ENCODE measurements at regions of chr12 and their contacts with region 1.

Region 1: DNA sequence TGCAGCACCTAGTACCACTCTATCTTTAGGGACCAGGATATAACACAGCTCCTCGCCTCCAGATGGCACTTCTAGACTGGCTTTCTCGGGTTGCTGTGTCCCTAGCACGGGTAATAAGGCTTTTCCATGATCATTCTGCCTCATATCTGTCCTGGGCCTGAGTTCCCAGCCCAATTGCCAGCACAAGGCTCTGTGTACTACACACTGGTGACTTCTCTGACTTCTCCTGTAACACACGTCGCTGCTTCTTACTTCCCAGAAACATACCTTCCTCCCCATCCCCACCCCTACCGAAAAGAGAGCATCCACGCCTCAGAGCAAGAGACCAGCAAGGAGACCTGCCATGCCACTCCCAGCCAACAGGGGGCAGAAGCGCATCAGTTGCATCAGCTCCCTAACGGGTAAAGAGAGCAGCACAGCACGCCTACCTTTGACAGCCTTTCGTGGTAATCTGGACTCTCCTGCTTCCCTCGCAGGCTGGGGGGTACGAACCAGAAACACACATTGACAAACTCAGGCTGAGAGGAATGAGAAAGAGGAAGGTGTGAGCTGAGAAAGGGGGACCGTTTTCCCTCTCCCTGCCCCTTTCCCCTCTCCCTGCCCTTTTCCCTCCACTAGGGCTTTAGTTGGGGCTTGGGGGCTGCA is 21.2 kb upstream of the ZNF740 start:
- DNase-seq: peak; percentile 83 to 85 (median 85)
- H3K4me3 ChIP-seq: no peak overlapping the region
- H3K4me3 Mint-ChIP-seq: peak overlapping the region in 2 of 8 donors; percentile 2 to 54
- H3K27ac ChIP-seq: no peak overlapping the region
- H3K27ac Mint-ChIP-seq: peak overlapping the region in 4 of 7 donors; percentile 3 to 87 (median 44)
- H3K4me1 ChIP-seq: peaks cover 10% of the 10 kb centered on the region
- H3K4me1 Mint-ChIP-seq: peaks cover 5 to 8% (median 6%) of the 10 kb centered on the region in 4 donors
- H3K27me3 ChIP-seq: no peaks in the 10 kb centered on the region
- H3K27me3 Mint-ChIP-seq: no peaks in the 10 kb centered on the region

Region 2: DNA sequence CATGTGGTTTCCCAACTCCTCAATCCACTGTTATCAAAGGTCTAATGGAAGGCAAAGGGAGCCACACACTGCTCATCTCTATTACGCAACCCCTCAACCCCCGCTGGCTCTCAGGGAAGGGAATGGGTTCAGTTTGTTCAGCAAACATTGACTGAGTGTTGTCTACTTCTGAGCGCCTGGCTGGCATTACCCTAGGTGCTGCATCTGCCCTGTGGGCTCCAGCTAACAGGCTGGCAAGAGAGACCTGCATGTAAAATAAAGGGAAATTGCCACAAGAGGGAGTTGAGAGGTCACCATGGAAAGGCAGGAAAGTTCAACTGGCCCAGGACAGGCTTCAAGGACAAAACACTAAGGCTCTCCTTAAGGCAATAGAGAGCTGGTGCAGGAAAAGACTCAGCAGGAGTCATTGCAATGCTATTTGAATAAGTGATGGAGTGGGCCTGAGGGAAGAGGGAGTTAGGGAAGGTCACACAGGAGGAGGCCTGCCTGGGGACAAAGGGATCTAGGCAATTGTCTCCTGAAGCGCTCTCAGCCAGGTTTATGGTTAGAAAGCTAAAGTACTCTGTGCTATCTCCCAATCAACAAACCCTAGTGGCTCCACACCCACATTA is 15.7 kb after region 1 on chr12:
- CTCF ChIA-PET with region 1: interaction called, 51 read pairs
- POLR2A ChIA-PET with region 1: interaction called, 17 read pairs
- intact Hi-C with region 1: loop called (anchors 1 kb)
- DNase-seq: no peak
- H3K4me3 ChIP-seq: no peak overlapping the region
- H3K4me3 Mint-ChIP-seq: no peak overlapping the region
- H3K27ac ChIP-seq: no peak overlapping the region
- H3K27ac Mint-ChIP-seq: peak overlapping the region in 1 of 7 donors; percentile 61
- H3K4me1 ChIP-seq: peaks cover 12% of the 10 kb centered on the region
- H3K4me1 Mint-ChIP-seq: peaks cover 8 to 11% (median 11%) of the 10 kb centered on the region in 4 donors
- H3K27me3 ChIP-seq: no peaks in the 10 kb centered on the region
- H3K27me3 Mint-ChIP-seq: no peaks in the 10 kb centered on the region

Region 3: DNA sequence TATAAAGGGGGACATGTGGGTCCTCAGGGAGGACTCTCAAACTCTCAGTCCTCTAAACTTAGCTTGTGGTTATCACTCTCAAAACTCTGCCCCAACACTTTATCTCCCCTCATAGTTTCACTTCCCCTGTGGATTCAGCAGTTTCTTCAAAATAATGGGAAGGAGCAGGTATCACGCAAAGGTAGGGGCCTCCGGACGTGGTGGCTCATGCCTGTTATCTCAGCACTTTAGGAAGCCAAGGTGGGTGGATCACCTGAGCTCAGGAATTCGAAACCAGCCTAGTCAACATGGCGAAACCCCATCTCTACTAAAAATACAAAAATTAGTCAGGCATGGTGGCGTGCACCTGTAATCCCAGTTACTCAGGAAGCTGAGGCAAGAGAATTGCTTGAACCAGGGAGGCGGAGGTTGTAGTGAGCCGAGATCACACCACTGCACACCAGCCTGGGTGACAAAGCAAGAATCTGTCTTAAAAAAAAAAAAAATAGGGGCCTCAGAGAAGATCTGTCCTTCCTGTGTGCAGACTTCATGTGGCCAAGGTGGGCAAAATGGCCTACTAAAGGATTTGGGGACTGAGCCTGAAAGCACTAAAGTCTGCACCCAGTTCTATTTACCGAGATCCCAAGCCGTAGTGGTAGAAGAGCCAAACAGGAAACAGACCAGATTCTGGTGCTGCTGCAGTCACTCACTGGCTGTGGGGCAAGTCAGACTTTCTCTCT is 41.3 kb after region 1 on chr12:
- CTCF ChIA-PET with region 1: interaction called, 30 read pairs
- POLR2A ChIA-PET with region 1: interaction called, 6 read pairs
- intact Hi-C with region 1: loop called (anchors 2 kb)
- DNase-seq: no peak
- H3K4me3 ChIP-seq: peak overlapping the region; percentile 12 to 29
- H3K4me3 Mint-ChIP-seq: peak overlapping the region; percentile 66 to 89 (median 73)
- H3K27ac ChIP-seq: peak overlapping the region; percentile 41
- H3K27ac Mint-ChIP-seq: peak overlapping the region; percentile 73 to 95 (median 86)
- H3K4me1 ChIP-seq: peaks cover 95% of the 10 kb centered on the region
- H3K4me1 Mint-ChIP-seq: peaks cover 48 to 84% (median 66%) of the 10 kb centered on the region in 4 donors
- H3K27me3 ChIP-seq: no peaks in the 10 kb centered on the region
- H3K27me3 Mint-ChIP-seq: no peaks in the 10 kb centered on the region

Region 4: GRCh38 chr12:53220801-53221202 is 61.5 kb after region 1 on chr12:
- CTCF ChIA-PET with region 1: interaction called, 3 read pairs
- POLR2A ChIA-PET with region 1: interaction called, 12 read pairs
- intact Hi-C with region 1: no loop called
- DNase-seq: peak; percentile 60 to 85 (median 65)
- H3K4me3 ChIP-seq: peak overlapping the region; percentile 73 to 82
- H3K4me3 Mint-ChIP-seq: peak overlapping the region; percentile 95 to 99 (median 98)
- H3K27ac ChIP-seq: peak overlapping the region; percentile 98
- H3K27ac Mint-ChIP-seq: peak overlapping the region; percentile 93 to 99 (median 97)
- H3K4me1 ChIP-seq: peaks cover 78% of the 10 kb centered on the region
- H3K4me1 Mint-ChIP-seq: peaks cover 63 to 93% (median 72%) of the 10 kb centered on the region in 4 donors
- H3K27me3 ChIP-seq: no peaks in the 10 kb centered on the region
- H3K27me3 Mint-ChIP-seq: no peaks in the 10 kb centered on the region

Region 5: DNA sequence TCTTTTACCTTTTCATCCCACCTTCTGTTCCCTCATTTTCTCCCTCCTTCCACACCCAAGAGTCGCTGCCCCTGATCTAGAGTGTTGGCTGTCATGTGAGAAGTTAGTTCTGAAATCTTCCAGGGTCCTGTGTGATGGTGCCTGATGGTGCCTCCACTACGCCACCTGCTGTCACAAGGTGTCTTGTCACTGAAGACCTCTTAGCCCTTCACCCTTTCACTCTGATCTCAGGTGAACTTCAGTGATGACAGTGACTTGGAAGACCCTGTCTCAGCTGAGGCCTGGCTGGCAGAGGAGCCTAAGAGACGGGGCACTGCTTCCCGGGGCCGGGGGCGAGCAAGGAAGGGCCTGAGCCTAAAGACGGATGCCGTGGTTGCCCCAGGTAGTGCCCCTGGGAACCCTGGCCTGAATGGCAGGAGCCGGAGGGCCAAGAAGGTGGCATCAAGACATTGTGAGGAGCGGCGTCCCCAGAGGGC is 128.5 kb after region 1 on chr12:
- CTCF ChIA-PET with region 1: interaction called, 165 read pairs
- POLR2A ChIA-PET with region 1: interaction called, 11 read pairs
- intact Hi-C with region 1: no loop called
- DNase-seq: peak; percentile 68 to 73 (median 72)
- H3K4me3 ChIP-seq: no peak overlapping the region
- H3K4me3 Mint-ChIP-seq: peak overlapping the region in 1 of 8 donors; percentile 32
- H3K27ac ChIP-seq: no peak overlapping the region
- H3K27ac Mint-ChIP-seq: peak overlapping the region in 4 of 7 donors; percentile 3 to 71 (median 34)
- H3K4me1 ChIP-seq: no peaks in the 10 kb centered on the region
- H3K4me1 Mint-ChIP-seq: peaks cover 4 to 7% (median 5%) of the 10 kb centered on the region in 4 donors
- H3K27me3 ChIP-seq: no peaks in the 10 kb centered on the region
- H3K27me3 Mint-ChIP-seq: no peaks in the 10 kb centered on the region

Region 6: GRCh38 chr12:53424626-53425514 is 265.6 kb after region 1 on chr12:
- CTCF ChIA-PET with region 1: interaction called, 3 read pairs
- POLR2A ChIA-PET with region 1: no interaction called
- intact Hi-C with region 1: loop called (anchors 1 kb)
- DNase-seq: no peak
- H3K4me3 ChIP-seq: no peak overlapping the region
- H3K4me3 Mint-ChIP-seq: no peak overlapping the region
- H3K27ac ChIP-seq: no peak overlapping the region
- H3K27ac Mint-ChIP-seq: no peak overlapping the region
- H3K4me1 ChIP-seq: peaks cover 5% of the 10 kb centered on the region
- H3K4me1 Mint-ChIP-seq: peaks cover 5 to 9% (median 6%) of the 10 kb centered on the region in 4 donors
- H3K27me3 ChIP-seq: no peaks in the 10 kb centered on the region
- H3K27me3 Mint-ChIP-seq: no peaks in the 10 kb centered on the region

Region 7: DNA sequence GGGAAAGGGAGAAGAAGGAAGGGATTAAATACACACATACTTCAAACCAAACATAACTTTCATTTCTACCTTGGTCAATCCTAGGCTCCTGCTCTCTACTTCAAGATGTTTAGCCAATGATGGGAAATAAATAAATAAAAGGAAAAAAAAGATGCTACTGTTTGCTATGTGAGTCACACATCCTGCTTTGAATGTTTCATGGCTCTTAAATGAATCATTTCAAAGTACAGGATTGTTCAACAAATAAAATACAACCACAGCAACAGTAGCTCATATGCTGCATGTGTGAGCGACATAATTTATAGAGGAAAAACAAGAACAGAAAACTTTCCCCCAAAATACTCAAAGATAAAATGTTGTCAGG is 402.3 kb after region 1 on chr12:
- CTCF ChIA-PET with region 1: no interaction called
- POLR2A ChIA-PET with region 1: no interaction called
- intact Hi-C with region 1: no loop called
- DNase-seq: no peak
- H3K4me3 ChIP-seq: no peak overlapping the region
- H3K4me3 Mint-ChIP-seq: no peak overlapping the region
- H3K27ac ChIP-seq: no peak overlapping the region
- H3K27ac Mint-ChIP-seq: peak overlapping the region in 2 of 7 donors; percentile 58 to 63
- H3K4me1 ChIP-seq: peaks cover 25% of the 10 kb centered on the region
- H3K4me1 Mint-ChIP-seq: peaks cover 24 to 44% (median 38%) of the 10 kb centered on the region in 4 donors
- H3K27me3 ChIP-seq: no peaks in the 10 kb centered on the region
- H3K27me3 Mint-ChIP-seq: no peaks in the 10 kb centered on the region

Measured in CD4-positive, alpha-beta memory T cell (primary cell).